CD8-positive, alpha-beta memory T cell (primary cell): ENCODE measurements at regions of chr17 and their contacts with region 1.

Region 1: GRCh38 chr17:49952209-49952911 is 16.6 kb upstream of the DLX4 start:
- DNase-seq: peak; percentile 65 to 85 (median 69)
- H3K4me3 ChIP-seq: no peak overlapping the region
- H3K4me3 Mint-ChIP-seq: no peak overlapping the region
- H3K27ac ChIP-seq: no peak overlapping the region
- H3K27ac Mint-ChIP-seq: no peak overlapping the region
- H3K4me1 ChIP-seq: no peaks in the 10 kb centered on the region
- H3K4me1 Mint-ChIP-seq: no peaks in the 10 kb centered on the region
- H3K27me3 ChIP-seq: peaks cover 31% of the 10 kb centered on the region
- H3K27me3 Mint-ChIP-seq: peaks cover 39 to 77% of the 10 kb centered on the region in 2 donors

Region 2: GRCh38 chr17:49939318-49939717 is 13.0 kb before region 1 on chr17:
- CTCF ChIA-PET with region 1: interaction called, 12 read pairs
- POLR2A ChIA-PET with region 1: no interaction called
- DNase-seq: no peak
- H3K4me3 ChIP-seq: no peak overlapping the region
- H3K4me3 Mint-ChIP-seq: no peak overlapping the region
- H3K27ac ChIP-seq: no peak overlapping the region
- H3K27ac Mint-ChIP-seq: no peak overlapping the region
- H3K4me1 ChIP-seq: no peaks in the 10 kb centered on the region
- H3K4me1 Mint-ChIP-seq: no peaks in the 10 kb centered on the region
- H3K27me3 ChIP-seq: no peaks in the 10 kb centered on the region
- H3K27me3 Mint-ChIP-seq: peaks cover 25 to 54% of the 10 kb centered on the region in 2 donors

Region 3: DNA sequence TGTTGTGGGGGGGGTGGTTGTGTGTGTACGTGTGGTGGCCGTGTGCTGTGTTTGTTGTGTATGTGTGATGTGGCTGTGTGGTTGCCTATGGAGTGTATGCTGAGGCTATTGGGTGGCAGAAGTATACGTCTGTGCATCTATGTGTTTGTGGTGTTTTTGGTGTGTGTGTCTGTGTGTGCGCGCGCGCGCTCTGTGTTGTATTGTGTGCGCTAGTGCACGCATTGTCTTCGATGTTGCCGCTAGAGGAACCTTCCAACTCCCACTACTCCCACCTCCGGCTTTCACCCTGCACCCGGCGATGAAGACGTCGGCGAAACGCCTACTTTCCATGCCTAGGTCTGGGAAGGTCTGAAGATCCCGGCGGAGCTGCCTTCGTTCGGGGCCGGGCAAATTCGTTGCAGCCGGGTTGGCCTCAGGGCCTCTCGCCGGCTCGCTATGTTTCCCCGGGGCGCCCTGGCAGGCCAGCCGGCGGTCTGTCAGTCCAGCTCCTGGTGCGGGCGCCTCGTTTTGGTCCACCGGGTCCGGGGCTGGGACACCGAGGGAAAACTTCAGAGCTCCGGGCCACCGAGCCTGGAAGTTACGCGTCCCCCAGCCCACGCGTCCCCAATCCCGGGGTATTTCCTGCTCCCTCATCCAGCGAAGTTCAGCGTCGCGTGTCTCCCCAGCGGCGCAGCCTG is 11.4 kb after region 1 on chr17:
- CTCF ChIA-PET with region 1: interaction called, 18 read pairs
- POLR2A ChIA-PET with region 1: no interaction called
- DNase-seq: no peak
- H3K4me3 ChIP-seq: no peak overlapping the region
- H3K4me3 Mint-ChIP-seq: peak overlapping the region; percentile 2 to 79 (median 53)
- H3K27ac ChIP-seq: no peak overlapping the region
- H3K27ac Mint-ChIP-seq: peak overlapping the region in 4 of 8 donors; percentile 13 to 89 (median 40)
- H3K4me1 ChIP-seq: peaks cover 32% of the 10 kb centered on the region
- H3K4me1 Mint-ChIP-seq: peaks cover 28 to 39% (median 37%) of the 10 kb centered on the region in 3 donors
- H3K27me3 ChIP-seq: peaks cover 52% of the 10 kb centered on the region
- H3K27me3 Mint-ChIP-seq: peaks cover 61 to 76% of the 10 kb centered on the region in 2 donors

Region 4: DNA sequence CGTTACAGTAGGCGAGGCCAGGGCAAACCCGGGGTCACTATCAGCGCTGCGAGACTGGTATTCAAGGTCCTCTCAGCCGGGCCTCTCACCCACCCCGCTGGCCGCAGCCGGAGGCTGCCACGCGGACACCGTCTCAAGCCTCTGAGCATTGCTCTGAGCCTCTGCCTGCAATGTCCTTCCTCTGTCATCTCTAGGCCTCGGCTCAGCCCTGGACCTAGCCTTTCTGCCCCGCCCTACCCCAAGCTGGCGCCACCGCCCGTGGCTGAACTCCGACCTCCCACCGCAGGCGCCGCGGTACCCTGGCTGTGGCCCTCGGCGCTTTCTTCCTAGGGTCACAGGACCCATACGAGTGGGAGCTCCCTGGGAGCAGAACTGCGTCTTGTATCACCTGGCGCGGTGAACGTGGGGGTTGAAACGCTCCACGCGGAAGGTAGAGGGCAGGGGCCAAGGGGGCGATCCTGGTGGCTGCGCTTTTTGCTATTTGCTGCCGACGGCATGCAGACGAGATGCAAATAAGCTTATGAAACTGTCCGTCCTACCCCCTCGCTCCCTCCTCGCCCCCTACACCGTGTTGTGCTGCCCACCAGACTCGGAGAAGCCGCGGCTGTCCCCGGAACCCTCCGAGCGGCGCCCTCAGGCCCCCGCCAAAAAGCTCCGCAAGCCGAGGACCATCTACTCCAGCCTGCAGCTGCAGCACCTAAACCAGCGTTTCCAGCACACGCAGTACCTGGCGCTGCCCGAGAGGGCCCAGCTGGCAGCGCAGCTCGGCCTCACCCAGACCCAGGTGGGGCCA is 20.3 kb after region 1 on chr17:
- CTCF ChIA-PET with region 1: interaction called, 10 read pairs
- POLR2A ChIA-PET with region 1: no interaction called
- DNase-seq: no peak
- H3K4me3 ChIP-seq: no peak overlapping the region
- H3K4me3 Mint-ChIP-seq: peak overlapping the region in 3 of 7 donors; percentile 24 to 77 (median 67)
- H3K27ac ChIP-seq: no peak overlapping the region
- H3K27ac Mint-ChIP-seq: peak overlapping the region in 1 of 8 donors; percentile 39
- H3K4me1 ChIP-seq: peaks cover 30% of the 10 kb centered on the region
- H3K4me1 Mint-ChIP-seq: peaks cover 27 to 47% (median 40%) of the 10 kb centered on the region in 3 donors
- H3K27me3 ChIP-seq: peaks cover 50% of the 10 kb centered on the region
- H3K27me3 Mint-ChIP-seq: peaks cover 58 to 81% of the 10 kb centered on the region in 2 donors

Region 5: GRCh38 chr17:49987681-49988441 is 35.5 kb after region 1 on chr17:
- CTCF ChIA-PET with region 1: interaction called, 11 read pairs
- POLR2A ChIA-PET with region 1: no interaction called
- DNase-seq: no peak
- H3K4me3 ChIP-seq: no peak overlapping the region
- H3K4me3 Mint-ChIP-seq: no peak overlapping the region
- H3K27ac ChIP-seq: no peak overlapping the region
- H3K27ac Mint-ChIP-seq: no peak overlapping the region
- H3K4me1 ChIP-seq: no peaks in the 10 kb centered on the region
- H3K4me1 Mint-ChIP-seq: peaks cover 0 to 2% (median 2%) of the 10 kb centered on the region in 3 donors
- H3K27me3 ChIP-seq: peaks cover 26% of the 10 kb centered on the region
- H3K27me3 Mint-ChIP-seq: peaks cover 41 to 77% of the 10 kb centered on the region in 2 donors

Region 6: DNA sequence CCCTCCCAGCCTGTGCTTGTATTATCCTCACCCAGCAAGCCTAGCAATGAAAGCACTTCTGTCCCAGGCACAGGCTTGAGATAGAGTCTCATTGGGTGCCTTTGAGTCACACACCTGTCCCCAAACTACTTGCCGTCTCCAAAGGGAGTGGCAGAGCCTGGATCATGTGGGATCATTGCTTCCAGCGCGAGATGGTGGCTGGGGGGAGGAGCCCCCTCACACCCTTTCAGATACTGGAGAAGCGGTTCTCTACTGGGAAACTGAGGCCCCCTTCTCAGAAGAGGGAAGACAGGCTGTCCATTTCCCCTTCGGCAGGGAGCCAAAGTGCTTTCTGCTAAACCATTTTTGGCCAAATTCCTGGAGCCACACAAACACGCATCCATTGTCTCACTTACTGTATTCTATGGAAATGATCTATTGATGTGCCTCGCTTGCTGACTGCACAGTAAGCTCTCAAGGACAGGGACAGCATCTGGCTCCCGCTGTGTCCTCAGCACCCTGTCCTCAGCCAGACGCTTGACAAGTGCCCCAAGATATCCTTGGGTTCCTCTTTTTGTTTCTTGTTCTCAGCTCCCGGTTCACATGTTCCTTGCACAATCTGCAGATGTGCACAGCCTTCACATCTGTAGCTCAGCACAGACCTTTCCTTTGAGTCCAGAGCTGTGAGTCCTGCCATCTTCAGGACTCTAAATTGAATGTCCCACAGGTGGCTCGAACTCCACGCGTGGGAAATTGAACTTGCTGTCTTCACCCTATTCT is 68.7 kb after region 1 on chr17:
- CTCF ChIA-PET with region 1: no interaction called
- POLR2A ChIA-PET with region 1: no interaction called
- DNase-seq: no peak
- H3K4me3 ChIP-seq: no peak overlapping the region
- H3K4me3 Mint-ChIP-seq: no peak overlapping the region
- H3K27ac ChIP-seq: no peak overlapping the region
- H3K27ac Mint-ChIP-seq: no peak overlapping the region
- H3K4me1 ChIP-seq: no peaks in the 10 kb centered on the region
- H3K4me1 Mint-ChIP-seq: no peaks in the 10 kb centered on the region
- H3K27me3 ChIP-seq: no peaks in the 10 kb centered on the region
- H3K27me3 Mint-ChIP-seq: peaks cover 13 to 26% of the 10 kb centered on the region in 2 donors